CD4-positive, alpha-beta T cell (primary cell): ENCODE measurements at regions of chr3 and their contacts with region 1.

Region 1: DNA sequence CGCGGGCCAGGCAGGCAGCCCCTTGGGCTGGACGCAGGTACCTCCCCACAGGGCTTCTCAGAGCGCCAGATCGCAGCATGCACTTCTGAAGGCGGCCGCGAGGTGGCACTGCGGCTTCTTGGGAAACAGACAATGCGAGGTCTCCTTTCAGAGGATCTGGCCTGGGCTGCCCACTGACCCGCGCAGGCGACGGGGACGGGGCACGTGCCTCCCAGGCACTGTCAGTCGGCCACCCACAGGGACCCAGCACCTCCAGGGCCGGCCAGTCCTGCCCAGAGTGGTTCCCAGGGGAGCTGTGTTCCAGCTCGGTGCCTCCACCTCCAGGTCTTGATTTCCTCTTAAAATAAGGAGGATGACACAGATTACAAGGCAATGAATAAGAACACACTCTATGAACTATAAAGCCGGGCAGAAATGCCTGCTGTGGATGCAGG is 24.4 kb upstream of the TXNRD3 start:
- DNase-seq: peak; percentile 52 to 84 (median 74)
- ATAC-seq: peak; percentile 81
- H3K4me3 ChIP-seq: no peak overlapping the region
- H3K4me3 Mint-ChIP-seq: no peak overlapping the region
- H3K27ac ChIP-seq: no peak overlapping the region
- H3K27ac Mint-ChIP-seq: no peak overlapping the region
- H3K4me1 ChIP-seq: peaks cover 7% of the 10 kb centered on the region
- H3K4me1 Mint-ChIP-seq: peaks cover 6% of the 10 kb centered on the region
- H3K27me3 ChIP-seq: peaks cover 2 to 11% of the 10 kb centered on the region in 2 experiments
- H3K27me3 Mint-ChIP-seq: peaks cover 20% of the 10 kb centered on the region
- CTCF ChIP-seq: peak; percentile 97

Region 2: DNA sequence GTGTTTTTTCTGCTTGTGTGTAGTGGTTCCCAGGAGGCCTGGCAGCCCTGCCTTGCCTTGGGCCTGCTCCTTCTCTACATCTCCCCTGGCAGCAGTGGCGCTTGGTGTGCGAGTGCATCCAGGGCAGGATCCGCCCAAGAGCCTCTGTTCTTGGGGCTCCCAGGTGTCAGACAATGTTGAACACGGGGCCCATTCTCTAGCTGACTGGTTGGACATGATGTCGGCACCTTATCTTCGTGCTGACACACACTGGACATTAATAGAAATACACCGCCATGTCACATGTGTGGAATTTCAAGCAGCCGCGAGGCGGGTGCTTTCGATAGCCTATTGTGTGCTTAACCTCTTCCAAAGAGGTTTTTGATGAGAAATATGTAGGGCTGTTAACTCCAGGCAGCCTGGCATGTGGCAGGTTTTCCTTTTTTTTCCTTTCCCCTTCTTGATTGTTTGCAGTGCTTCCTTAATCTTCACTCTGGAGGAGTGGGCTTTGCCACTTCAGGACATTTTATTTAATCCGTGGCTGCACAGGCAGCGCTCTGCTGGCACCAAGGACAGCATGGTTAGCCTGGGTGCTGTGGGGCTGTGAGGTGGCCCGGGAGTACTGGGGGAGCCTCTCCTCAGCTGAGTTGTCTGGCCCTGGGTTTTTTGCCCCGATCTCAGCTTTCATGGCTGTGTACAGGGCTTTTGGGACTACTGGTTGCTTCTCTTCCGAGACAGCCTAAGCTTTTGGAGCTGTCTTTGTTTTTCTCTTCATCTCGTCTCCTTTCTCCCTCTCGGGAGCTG is 67.3 kb after region 1 on chr3:
- CTCF ChIA-PET with region 1: no interaction called
- POLR2A ChIA-PET with region 1: no interaction called
- intact Hi-C with region 1: no loop called
- DNase-seq: no peak
- ATAC-seq: no peak
- H3K4me3 ChIP-seq: no peak overlapping the region
- H3K4me3 Mint-ChIP-seq: no peak overlapping the region
- H3K27ac ChIP-seq: no peak overlapping the region
- H3K27ac Mint-ChIP-seq: no peak overlapping the region
- H3K4me1 ChIP-seq: no peaks in the 10 kb centered on the region
- H3K4me1 Mint-ChIP-seq: peaks cover 8% of the 10 kb centered on the region
- H3K27me3 ChIP-seq: no peaks in the 10 kb centered on the region
- H3K27me3 Mint-ChIP-seq: no peaks in the 10 kb centered on the region
- CTCF ChIP-seq: no peak

Region 3: DNA sequence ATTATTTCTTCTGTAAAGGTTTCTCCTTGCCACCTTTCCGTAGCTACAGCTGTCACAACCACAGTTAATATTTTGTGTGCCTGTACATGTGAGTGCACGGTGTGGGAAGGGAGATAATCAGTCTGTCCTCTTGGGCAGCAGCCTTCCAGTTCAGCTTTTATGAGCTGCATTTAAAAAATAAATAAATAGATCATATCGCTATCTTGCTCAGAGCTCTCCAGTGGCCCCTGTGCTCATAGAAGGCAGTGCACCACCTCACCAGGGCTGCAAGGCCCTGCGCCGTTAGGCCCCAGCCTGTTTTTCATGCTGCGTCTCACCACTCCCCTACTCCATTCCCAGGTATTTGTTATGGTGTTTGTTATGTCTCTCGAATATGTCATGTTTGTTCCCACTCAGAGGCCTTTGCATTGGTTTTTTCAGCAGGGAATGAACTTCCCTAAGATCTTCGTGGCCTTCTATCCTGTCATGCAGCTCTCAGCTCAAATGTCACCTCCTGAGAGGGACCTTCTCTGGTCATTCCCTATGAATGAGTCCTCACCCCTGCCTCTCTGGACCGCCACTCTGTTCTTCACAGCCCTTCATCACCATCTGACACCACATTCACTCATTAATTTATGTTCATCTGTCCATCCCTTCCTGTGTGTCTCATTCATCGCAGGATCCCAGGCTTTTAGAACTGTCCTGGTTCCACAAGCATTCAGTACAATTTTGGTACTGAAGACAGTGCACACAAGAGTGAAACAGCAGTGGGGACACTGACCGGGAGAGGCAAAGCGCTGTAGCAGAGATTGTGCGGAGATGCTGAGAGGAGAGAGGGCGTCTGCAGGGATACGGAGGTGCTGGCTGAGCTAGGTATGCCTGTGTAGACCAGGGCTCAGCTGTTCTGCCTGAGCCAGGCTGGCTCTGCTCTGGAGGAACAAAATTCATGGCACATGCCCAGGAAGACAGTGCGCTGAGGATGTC is 156.8 kb after region 1 on chr3:
- CTCF ChIA-PET with region 1: no interaction called
- POLR2A ChIA-PET with region 1: no interaction called
- intact Hi-C with region 1: no loop called
- DNase-seq: no peak
- ATAC-seq: no peak
- H3K4me3 ChIP-seq: no peak overlapping the region
- H3K4me3 Mint-ChIP-seq: no peak overlapping the region
- H3K27ac ChIP-seq: no peak overlapping the region
- H3K27ac Mint-ChIP-seq: no peak overlapping the region
- H3K4me1 ChIP-seq: no peaks in the 10 kb centered on the region
- H3K4me1 Mint-ChIP-seq: no peaks in the 10 kb centered on the region
- H3K27me3 ChIP-seq: no peaks in the 10 kb centered on the region
- H3K27me3 Mint-ChIP-seq: no peaks in the 10 kb centered on the region
- CTCF ChIP-seq: no peak

Region 4: DNA sequence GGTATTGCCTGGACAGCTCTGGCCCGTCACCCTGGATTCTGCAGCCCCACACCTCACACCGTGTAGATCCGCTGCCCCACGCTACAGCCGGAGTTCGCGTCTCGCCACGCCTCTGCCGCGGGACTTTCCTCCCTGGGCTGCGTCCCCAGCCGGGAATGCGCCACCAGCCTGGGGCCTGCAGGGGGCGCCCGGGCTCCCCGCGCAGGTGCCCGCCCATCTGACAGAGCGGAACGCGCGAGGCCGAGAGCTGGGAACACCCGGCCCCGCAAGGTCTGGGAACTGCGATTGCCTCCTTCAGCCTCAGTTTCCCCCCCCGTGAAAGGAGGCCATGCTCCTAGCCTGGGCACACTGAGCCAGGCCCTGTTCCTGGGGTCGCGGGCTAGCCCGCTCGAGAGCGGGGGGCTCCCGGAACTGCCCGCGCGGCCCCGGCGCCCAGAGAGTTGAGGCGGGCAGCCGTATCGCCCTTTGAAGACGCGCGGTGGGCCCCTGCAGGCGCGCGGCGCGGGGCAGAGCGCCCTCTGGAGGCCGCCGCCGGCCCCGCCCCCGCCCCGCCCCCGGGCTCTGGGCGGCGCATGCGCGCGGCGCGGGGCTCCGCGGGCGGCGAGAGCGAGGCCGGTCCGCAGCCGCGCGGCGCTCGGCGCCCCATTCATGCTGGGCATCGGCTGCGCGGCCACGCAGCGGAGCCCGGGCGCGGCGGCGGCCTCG is 303.3 kb after region 1 on chr3 and contains the start of gene PLXNA1:
- CTCF ChIA-PET with region 1: interaction called, 3 read pairs
- POLR2A ChIA-PET with region 1: no interaction called
- intact Hi-C with region 1: loop called in 1 of 2 experiments (anchors 5 kb)
- DNase-seq: peak; percentile 76 to 95 (median 85)
- ATAC-seq: peak; percentile 82
- H3K4me3 ChIP-seq: peak within 1 kb of the TSS; percentile 67
- H3K4me3 Mint-ChIP-seq: peak within 1 kb of the TSS; percentile 89
- H3K27ac ChIP-seq: peak within 1 kb of the TSS; percentile 88 to 90
- H3K27ac Mint-ChIP-seq: peak within 1 kb of the TSS; percentile 93
- H3K4me1 ChIP-seq: peaks cover 30% of the 10 kb centered on the region
- H3K4me1 Mint-ChIP-seq: peaks cover 15% of the 10 kb centered on the region
- H3K27me3 ChIP-seq: peaks cover 0 to 5% of the 10 kb centered on the region in 2 experiments
- H3K27me3 Mint-ChIP-seq: peaks cover 10% of the 10 kb centered on the region
- CTCF ChIP-seq: peak; percentile 99
- total RNA-seq, gene PLXNA1: 9.8 to 10.6 TPM